WTC11 (cell line): ENCODE measurements at regions of chrX and their contacts with region 1.

Region 1: DNA sequence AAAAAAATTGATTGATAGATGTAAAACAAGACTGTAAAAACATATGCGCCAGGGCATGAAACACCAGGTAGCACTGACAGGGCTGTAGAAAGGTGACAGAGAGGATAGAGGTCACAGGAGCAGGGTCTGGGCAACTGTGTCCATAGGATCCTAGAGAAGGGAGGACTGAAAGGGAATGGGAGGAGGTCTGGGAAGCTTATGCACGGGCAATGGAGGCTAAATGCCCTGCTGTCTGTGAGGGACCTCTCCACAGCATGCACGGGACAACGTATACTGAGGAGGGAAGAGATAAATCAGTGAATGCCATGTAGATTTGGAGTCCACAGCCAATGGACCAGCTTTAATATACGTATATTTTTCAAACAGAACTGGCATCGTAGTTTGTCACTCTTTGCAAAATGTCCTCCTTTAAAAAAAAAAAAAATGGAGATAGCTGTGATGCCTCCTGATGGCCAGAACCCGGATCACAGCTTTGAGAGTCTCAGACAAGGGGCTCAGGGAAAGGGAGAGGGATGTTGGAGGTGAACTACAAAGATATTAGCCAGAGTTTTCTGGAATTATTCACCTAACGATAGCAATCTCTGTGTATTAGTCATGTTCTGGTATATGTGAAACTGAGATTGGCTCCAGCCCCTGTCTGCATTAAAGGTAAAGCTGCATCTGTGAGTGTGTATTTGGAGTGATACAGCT is 16.0 kb downstream of the RAB40A start:
- DNase-seq: no peak
- ATAC-seq: peak; percentile 41; the same call in 1 of the 2 replicates
- H3K4me3 Mint-ChIP-seq: peak overlapping the region; percentile 29; the same call in 1 of the 2 replicates
- H3K27ac Mint-ChIP-seq: no peak overlapping the region
- H3K4me1 Mint-ChIP-seq: no peaks in the 10 kb centered on the region
- H3K27me3 Mint-ChIP-seq: no peaks in the 10 kb centered on the region; the same call in 1 of the 2 replicates
- CTCF ChIP-seq: no peak

Region 2: DNA sequence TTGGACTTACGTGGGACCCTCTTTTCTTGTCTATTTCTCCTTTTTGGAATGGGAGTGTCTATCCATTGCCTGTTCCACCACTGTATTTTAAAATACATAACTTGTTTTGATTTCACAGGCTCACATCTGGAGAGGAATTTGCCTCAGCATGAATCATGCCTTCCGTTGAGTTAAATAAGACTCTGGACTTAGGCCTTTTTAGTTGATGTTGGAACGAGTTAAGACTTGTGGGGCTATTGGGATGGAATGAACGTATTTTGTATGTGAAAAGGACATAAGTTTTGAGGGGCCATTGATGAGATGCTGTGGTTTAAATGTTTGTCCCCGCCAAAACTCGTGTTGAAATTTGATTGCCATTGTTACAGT is 60.8 kb before region 1 on chrX:
- CTCF ChIA-PET with region 1: no interaction called
- POLR2A ChIA-PET with region 1: no interaction called
- DNase-seq: no peak
- ATAC-seq: no peak
- H3K4me3 Mint-ChIP-seq: no peak overlapping the region
- H3K27ac Mint-ChIP-seq: 0 out of 2 replicates have a peak overlapping the region, but pooled peaks have one; percentile 6
- H3K4me1 Mint-ChIP-seq: peaks cover 61% of the 10 kb centered on the region
- H3K27me3 Mint-ChIP-seq: no peaks in the 10 kb centered on the region
- CTCF ChIP-seq: no peak

Region 3: DNA sequence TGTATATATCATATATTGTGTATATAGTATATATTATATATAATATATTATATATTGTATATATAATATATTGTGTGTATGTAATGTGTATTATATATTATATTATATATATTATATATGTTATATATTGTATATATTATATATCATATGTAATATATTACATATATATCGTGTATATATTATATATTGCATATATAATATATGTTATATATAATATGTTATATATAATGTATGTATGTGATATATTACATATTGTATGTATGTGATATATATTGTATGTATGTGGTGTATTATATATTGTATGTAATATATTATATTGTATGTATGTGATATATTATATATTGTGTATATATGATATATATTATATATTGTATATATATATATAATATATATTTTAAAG is 14.5 kb before region 1 on chrX:
- CTCF ChIA-PET with region 1: interaction called, 10 read pairs
- POLR2A ChIA-PET with region 1: no interaction called
- DNase-seq: no peak
- ATAC-seq: no peak
- H3K4me3 Mint-ChIP-seq: no peak overlapping the region
- H3K27ac Mint-ChIP-seq: no peak overlapping the region
- H3K4me1 Mint-ChIP-seq: no peaks in the 10 kb centered on the region
- H3K27me3 Mint-ChIP-seq: no peaks in the 10 kb centered on the region
- CTCF ChIP-seq: no peak